Colonic mucosa (tissue), 4 donors: ENCODE measurements at regions of chr10 and their contacts with region 1.

Region 1: DNA sequence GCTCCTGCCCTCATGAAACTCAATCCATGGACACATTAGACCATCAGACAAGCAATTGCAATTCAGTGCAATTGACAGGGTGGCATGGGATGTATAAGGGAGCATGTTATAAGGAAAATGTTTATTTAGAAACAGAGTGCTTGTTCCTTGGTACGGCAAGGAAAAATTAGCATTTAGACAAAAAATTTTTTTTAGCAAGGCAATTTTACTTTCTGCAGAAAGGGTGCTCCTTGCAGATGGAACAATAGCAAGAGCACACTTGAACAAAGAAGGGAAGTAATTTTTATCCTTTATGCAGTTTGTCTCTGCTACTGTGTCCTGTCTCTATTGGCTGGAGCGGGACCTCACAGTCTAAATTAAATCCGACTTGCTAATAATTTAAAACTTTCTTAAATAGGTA is 6.2 kb upstream of the BAG3 start:
- DNase-seq: no peak
- H3K4me3 ChIP-seq: no peak overlapping the region
- H3K27ac ChIP-seq: no peak overlapping the region
- H3K4me1 ChIP-seq: no peaks in the 10 kb centered on the region
- H3K27me3 ChIP-seq: no peaks in the 10 kb centered on the region
- CTCF ChIP-seq: no peak

Region 2: DNA sequence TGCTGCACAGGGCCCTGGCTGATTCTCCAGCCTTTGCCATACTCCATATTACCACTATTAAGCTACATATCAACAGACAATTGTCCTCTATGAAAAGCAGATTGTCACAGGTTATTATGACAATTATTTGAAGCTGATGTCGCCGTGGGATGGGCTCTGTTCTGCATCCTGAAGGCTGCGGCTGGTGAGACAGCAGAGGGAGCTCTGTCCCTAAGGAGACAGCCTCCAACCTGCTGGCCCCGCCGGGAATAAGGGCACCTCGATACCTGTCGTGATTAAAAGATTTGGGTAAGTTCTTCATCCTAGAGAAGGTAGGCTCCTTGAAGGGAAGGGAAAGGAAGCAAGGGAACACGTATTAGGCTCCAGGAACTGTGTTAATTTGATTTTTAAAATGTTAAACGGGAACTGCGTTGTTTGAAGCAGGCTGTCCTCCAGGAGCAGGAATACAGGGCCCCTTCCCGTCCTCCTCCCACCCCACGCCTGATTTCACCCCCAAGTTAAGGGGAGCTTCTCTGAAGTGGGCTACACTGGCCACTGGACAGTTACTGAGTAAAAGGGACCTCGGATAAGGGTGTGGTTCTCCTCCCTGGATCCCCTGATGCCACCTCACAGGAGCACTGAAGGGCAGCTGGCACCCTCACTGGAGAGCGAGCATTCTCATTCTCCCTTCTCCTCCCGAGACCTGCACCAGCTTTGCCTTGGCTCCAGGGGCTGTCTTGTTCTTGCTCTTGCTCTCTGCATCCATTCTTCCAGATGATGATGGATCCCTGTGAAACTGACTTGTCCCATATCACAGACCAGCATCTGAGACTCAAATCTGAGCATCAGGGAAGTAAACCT is 36.5 kb before region 1 on chr10:
- intact Hi-C with region 1: loop called (anchors 5 kb)
- DNase-seq: peak; percentile 51
- H3K4me3 ChIP-seq: no peak overlapping the region
- H3K27ac ChIP-seq: no peak overlapping the region
- H3K4me1 ChIP-seq: no peaks in the 10 kb centered on the region
- H3K27me3 ChIP-seq: no peaks in the 10 kb centered on the region
- CTCF ChIP-seq: peak; percentile 44